ENCODE measurements at regions of chr6 and their contacts with region 1.

Region 1: GRCh38 chr6:132218059-132218696 is 183.1 kb downstream of the MOXD1 start:
- DNase-seq: peak; percentile 45
- H3K4me3 Mint-ChIP-seq: no peak overlapping the region
- H3K27ac Mint-ChIP-seq: no peak overlapping the region
- H3K4me1 Mint-ChIP-seq: no peaks in the 10 kb centered on the region
- H3K27me3 Mint-ChIP-seq: no peaks in the 10 kb centered on the region
- CTCF ChIP-seq: peak; percentile 38

Region 2: DNA sequence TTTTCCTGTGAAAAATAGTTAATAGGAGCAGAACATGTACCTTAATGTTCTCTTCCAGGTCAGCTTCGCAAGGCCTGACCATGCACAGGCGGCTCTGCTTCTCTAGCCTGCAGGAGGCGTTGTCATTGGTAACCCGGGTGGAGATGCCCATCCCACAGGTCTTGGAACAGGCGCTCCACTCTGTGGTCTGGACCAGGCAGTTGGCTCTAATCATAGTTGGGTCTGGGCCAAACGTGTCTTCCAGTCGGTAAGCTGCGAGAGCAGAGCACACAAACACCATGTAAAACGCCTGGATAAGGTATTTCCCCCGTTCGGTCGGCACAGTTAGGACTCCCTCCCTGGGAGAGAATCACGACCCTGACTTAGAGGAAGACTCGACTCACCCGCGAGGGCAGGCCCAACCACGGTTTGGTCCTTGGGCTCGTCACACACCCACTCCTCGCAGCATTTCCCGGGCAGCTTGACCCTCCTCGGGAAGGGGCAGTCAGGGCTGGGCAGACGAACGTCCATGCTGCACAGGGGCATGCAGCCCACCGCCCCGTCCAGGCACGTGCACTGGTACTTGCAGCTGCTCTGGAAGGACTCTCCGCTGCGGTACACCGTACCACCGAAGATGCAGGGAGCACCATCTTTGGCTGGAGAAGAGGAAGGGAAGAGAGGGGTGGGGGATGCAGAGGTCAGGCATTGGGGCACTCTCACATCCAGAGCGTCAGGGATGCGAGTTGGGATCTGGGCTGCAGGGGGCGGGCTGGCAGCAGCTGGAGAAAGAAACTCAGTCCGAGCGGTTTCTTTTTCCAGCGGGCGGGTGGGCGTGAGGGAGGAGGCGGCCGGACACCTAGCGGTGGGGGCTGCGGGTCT is 268.0 kb before region 1 on chr6:
- CTCF ChIA-PET with region 1: interaction called, 16 read pairs
- POLR2A ChIA-PET with region 1: interaction called, 4 read pairs
- intact Hi-C with region 1: loop called (anchors 1 kb)
- DNase-seq: peak; percentile 90
- H3K4me3 Mint-ChIP-seq: peak overlapping the region; percentile 88
- H3K27ac Mint-ChIP-seq: peak overlapping the region; percentile 76
- H3K4me1 Mint-ChIP-seq: peaks cover 44% of the 10 kb centered on the region
- H3K27me3 Mint-ChIP-seq: no peaks in the 10 kb centered on the region
- CTCF ChIP-seq: peak; percentile 45

Region 3: DNA sequence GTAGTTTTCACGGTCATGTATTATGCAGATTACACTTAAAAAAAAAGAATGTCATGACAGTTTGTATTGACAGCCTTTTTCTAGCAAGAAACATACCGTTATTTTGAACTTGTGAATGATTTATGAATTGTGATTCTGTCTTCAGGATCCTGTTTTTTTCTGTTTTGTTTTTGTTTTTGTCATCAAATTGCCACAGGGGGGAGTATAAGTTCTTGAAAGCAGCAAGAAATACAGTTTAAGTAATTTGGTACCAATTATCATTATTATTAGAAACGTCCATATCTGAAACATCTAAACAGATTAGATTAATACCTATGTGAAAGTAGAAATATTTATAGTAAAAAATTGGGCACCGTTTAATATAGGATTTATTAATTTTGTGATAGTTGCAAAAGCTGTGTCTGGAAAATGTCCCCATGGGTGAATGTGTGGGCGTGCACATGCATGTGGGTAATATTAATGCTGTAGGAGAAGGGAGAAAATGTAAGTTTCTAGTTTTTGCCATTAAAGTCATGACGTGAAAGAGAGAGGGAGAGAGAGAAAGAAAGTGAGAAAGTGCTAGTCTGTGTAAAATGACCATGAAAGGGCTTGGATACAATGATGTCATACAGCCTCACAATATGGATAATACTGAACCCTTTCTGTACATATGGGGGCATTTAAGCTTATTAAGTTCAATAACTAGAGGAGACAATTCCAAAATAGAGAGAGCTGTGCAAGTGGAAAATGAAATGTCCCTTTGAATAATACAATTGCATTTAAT is 257.6 kb before region 1 on chr6:
- CTCF ChIA-PET with region 1: interaction called, 8 read pairs
- POLR2A ChIA-PET with region 1: no interaction called
- intact Hi-C with region 1: loop called (anchors 1 kb)
- DNase-seq: no peak
- H3K4me3 Mint-ChIP-seq: no peak overlapping the region
- H3K27ac Mint-ChIP-seq: no peak overlapping the region
- H3K4me1 Mint-ChIP-seq: peaks cover under 1% of the 10 kb centered on the region
- H3K27me3 Mint-ChIP-seq: no peaks in the 10 kb centered on the region
- CTCF ChIP-seq: peak; percentile 41

Region 4: GRCh38 chr6:132161283-132161682 is 56.9 kb before region 1 on chr6:
- CTCF ChIA-PET with region 1: interaction called, 4 read pairs
- POLR2A ChIA-PET with region 1: no interaction called
- intact Hi-C with region 1: loop called (anchors 2 kb)
- DNase-seq: peak; percentile 51
- H3K4me3 Mint-ChIP-seq: no peak overlapping the region
- H3K27ac Mint-ChIP-seq: no peak overlapping the region
- H3K4me1 Mint-ChIP-seq: no peaks in the 10 kb centered on the region
- H3K27me3 Mint-ChIP-seq: no peaks in the 10 kb centered on the region
- CTCF ChIP-seq: peak; percentile 57

Region 5: GRCh38 chr6:132231121-132231884 is 13.1 kb after region 1 on chr6:
- CTCF ChIA-PET with region 1: interaction called, 15 read pairs
- POLR2A ChIA-PET with region 1: interaction called, 3 read pairs
- intact Hi-C with region 1: no loop called
- DNase-seq: no peak
- H3K4me3 Mint-ChIP-seq: no peak overlapping the region
- H3K27ac Mint-ChIP-seq: no peak overlapping the region
- H3K4me1 Mint-ChIP-seq: no peaks in the 10 kb centered on the region
- H3K27me3 Mint-ChIP-seq: no peaks in the 10 kb centered on the region
- CTCF ChIP-seq: no peak

Region 6: GRCh38 chr6:132259070-132259469 is 40.9 kb after region 1 on chr6:
- CTCF ChIA-PET with region 1: interaction called, 17 read pairs
- POLR2A ChIA-PET with region 1: no interaction called
- intact Hi-C with region 1: no loop called
- DNase-seq: peak; percentile 30
- H3K4me3 Mint-ChIP-seq: no peak overlapping the region
- H3K27ac Mint-ChIP-seq: no peak overlapping the region
- H3K4me1 Mint-ChIP-seq: peaks cover 10% of the 10 kb centered on the region
- H3K27me3 Mint-ChIP-seq: no peaks in the 10 kb centered on the region
- CTCF ChIP-seq: peak; percentile 28

Measured in MCF 10A (cell line).